CD14-positive monocyte (primary cell): ENCODE measurements at regions of chr19 and their contacts with region 1.

Region 1: DNA sequence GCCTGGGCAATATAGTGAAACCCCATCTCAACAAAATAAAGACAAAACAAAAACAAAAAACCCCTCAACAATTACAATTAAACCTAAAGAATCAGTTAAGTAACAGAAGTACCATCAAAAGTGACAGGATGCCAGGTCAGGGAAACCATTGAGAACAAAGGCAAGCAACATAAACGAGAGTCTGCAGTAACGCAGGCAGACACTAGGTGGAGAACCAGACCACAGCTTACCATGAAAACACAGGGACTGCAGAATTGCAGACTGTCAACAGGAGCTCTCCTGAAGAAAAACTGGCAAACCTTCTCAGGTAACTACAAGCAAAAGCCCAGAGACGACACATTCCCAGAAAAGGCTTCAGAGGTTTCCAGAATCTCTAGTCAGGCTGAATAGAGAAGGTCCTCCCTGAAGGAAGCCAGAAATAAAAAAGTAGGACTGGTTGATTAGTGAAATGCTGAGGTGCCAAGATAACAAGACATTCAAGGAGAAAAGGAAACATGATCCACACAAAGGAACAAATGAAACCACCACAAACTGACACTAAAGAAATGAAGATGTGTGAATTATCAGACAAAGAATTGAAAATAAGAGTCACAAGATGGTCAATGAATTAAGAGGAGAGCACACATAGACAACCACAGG is 2.2 kb upstream of the ZNF665 start:
- DNase-seq: peak; percentile 63 to 74 (median 72)
- H3K4me3 ChIP-seq: no peak overlapping the region
- H3K4me3 Mint-ChIP-seq: peak overlapping the region in 1 of 2 donors; percentile 20
- H3K27ac ChIP-seq: no peak overlapping the region
- H3K27ac Mint-ChIP-seq: no peak overlapping the region
- H3K4me1 ChIP-seq: peaks cover 22 to 23% of the 10 kb centered on the region in 2 donors
- H3K4me1 Mint-ChIP-seq: peaks cover 23% of the 10 kb centered on the region
- H3K27me3 ChIP-seq: no peaks in the 10 kb centered on the region
- H3K27me3 Mint-ChIP-seq: peaks cover 3 to 11% (median 4%) of the 10 kb centered on the region in 3 donors
- CTCF ChIP-seq: peak; percentile 88

Region 2: DNA sequence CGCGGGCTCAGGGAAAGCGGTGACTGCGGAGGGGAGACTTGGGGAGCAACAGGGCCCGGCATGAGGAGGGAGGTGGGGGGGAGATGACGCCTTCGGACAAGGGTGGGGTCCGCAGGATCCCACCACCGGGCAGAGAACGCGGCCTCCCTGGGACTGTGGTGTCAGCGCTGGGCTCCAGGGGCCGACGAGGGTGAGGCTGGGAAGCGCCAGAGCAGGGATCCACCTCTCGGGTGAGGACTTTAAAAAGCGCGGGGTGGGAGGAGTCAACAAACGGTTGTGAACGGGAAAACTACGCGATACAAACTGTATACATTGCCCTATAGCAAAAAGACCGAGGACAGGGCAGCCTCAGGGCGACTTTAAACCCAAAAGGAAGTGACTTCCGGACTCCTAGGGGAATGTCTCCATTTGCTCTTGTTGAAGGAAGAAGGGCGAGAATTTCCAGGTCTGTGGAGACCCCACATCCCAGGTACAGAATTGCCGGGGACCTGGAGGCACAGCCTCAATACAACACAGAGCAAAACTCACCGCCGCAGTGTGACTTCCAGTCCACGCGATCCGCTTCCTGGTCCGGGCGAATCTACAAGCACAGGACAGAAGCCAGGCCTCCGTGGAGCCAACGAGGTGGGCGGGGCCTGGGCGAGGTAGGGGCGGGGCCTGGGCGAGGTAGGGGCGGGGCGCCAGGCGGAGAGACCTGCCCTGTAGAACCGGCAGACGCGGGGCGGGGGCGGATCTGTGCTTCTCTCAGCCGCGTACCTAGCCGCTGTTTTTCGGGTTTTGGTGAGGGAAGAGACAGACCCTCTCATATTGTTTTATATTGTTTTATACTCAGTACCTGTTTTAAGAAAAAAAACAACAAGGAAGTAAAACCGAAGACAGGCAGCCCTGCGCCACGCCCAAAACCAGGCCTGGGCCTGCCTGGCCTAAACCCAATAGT is 272.3 kb before region 1 on chr19 and contains the start of gene ZNF888:
- intact Hi-C with region 1: loop called in 1 of 2 experiments (anchors 10 kb)
- DNase-seq: peak; percentile 82 to 85 (median 83)
- H3K4me3 ChIP-seq: peak within 1 kb of the TSS; percentile 62 to 89 (median 87)
- H3K4me3 Mint-ChIP-seq: peak within 1 kb of the TSS; percentile 93 to 96
- H3K27ac ChIP-seq: peak within 1 kb of the TSS; percentile 83 to 87
- H3K27ac Mint-ChIP-seq: peak within 1 kb of the TSS; percentile 93 to 98 (median 95)
- H3K4me1 ChIP-seq: peaks cover 24 to 29% of the 10 kb centered on the region in 2 donors
- H3K4me1 Mint-ChIP-seq: peaks cover 34% of the 10 kb centered on the region
- H3K27me3 ChIP-seq: no peaks in the 10 kb centered on the region
- H3K27me3 Mint-ChIP-seq: peaks cover 0 to 1% (median 0%) of the 10 kb centered on the region in 3 donors
- CTCF ChIP-seq: no peak
- polyA plus RNA-seq, gene ZNF888: 0.71 to 1.7 (median 1.4) TPM

Region 3: DNA sequence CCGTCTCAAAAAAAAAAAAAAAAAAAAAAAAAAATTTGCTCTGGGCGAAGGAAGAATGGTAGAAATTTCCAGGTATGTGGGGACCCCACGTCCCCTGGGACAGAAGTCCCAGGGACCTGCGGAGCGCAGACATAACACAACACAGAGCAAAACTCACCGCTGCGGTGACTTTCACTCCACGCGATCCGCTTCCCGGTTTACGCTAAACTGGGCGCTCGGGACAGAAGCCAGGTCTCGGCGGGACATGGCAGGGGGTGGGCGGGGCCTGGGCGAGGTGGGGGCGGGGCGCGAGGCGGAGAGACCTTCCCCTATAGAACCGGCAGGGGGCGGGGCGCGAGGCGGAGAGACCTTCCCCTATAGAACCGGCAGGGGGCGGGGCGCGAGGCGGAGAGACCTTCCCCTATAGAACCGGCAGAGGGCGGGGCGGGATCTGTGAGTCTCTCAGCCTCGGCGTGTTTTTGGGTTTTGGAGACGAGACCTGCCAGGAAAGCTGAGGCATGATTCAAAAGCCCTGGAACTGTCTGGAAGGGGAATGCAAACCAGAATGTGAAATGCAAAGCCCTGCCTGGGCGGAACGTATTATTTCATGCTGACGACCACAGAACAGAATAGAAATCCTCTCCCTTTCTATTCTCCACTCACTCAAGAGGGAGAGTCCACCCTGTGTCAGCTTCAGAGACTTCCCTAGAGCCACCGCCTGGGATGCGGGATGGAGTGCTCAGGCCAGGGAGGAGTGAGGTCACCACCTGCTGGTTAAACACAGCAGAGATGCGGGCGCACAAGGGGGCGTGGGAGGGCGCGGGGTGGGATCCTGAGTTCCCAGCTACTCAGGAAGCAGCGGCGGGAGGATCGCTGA is 201.8 kb before region 1 on chr19:
- intact Hi-C with region 1: loop called in 1 of 2 experiments (anchors 10 kb)
- DNase-seq: peak; percentile 61 to 71 (median 63)
- H3K4me3 ChIP-seq: peak overlapping the region; percentile 32 to 78 (median 37)
- H3K4me3 Mint-ChIP-seq: peak overlapping the region; percentile 83 to 87
- H3K27ac ChIP-seq: peak overlapping the region in 1 of 2 donors; percentile 22
- H3K27ac Mint-ChIP-seq: peak overlapping the region in 3 of 7 donors; percentile 25 to 63 (median 60)
- H3K4me1 ChIP-seq: peaks cover 21 to 42% of the 10 kb centered on the region in 2 donors
- H3K4me1 Mint-ChIP-seq: peaks cover 38% of the 10 kb centered on the region
- H3K27me3 ChIP-seq: peaks cover 0 to 8% of the 10 kb centered on the region in 2 donors
- H3K27me3 Mint-ChIP-seq: peaks cover 6 to 20% (median 7%) of the 10 kb centered on the region in 3 donors
- CTCF ChIP-seq: peak; percentile 89

Region 4: GRCh38 chr19:53132141-53132991 is 63.0 kb before region 1 on chr19 and contains the start of gene ZNF415:
- intact Hi-C with region 1: no loop called
- DNase-seq: peak; percentile 3 to 26 (median 20)
- H3K4me3 ChIP-seq: peak within 1 kb of the TSS; percentile 32 to 69 (median 33)
- H3K4me3 Mint-ChIP-seq: peak within 1 kb of the TSS; percentile 74 to 92
- H3K27ac ChIP-seq: no peak within 1 kb of the TSS
- H3K27ac Mint-ChIP-seq: no peak within 1 kb of the TSS
- H3K4me1 ChIP-seq: peaks cover 11 to 12% of the 10 kb centered on the region in 2 donors
- H3K4me1 Mint-ChIP-seq: peaks cover 18% of the 10 kb centered on the region
- H3K27me3 ChIP-seq: peaks cover 0 to 21% of the 10 kb centered on the region in 2 donors
- H3K27me3 Mint-ChIP-seq: peaks cover 17 to 31% (median 27%) of the 10 kb centered on the region in 3 donors
- CTCF ChIP-seq: no peak
- polyA plus RNA-seq, gene ZNF415: 0.11 to 0.17 TPM in 2 of 3 donors, not detected in the other

Region 5: DNA sequence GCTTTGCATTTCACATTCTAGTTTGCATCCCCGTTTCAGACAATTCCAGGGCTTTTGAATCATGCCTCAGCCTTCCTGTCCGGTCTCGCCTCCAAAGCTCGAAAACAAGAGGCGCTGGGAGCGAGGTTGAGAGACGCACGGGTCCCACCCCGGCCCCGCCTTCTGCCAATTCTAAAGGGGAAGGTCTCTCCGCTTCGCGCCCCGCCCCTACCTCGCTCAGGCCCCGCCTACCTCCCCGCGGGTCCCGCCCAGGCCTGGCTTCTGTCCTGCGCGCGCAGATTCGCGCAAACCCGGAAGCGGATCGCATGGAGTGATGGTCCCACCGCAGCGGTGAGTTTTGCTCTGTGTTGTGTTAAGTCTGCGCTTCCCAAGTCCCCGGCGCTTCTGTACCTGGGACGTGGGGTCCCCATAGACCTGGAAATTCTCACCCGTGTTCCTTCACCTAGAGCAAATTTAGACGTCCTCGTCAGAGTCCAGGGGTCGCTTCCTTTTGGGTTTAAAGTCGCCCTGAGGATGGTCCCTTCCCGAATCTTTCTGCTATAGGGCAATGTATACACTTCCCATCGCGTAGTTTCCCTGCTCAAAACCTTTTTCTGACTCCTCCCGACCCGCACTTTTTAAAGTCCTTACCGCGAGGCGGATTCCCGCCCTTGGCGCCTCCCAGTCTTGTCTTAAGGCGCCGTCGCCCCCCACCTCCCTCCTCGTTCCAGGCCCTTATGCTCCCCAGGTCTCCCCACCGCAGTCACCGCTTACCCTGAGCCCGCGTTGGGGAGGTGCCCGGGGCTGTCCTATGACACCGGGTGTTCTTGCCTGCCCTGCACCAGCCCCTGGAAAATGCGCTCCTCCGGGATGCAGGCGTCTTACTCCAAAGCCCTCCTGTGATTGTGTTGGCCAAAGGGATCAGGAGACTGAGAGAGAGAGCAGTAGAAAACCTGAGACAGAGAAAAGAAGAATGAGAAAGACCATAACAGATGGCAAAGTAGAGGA is 138.4 kb after region 1 on chr19 and contains the start of gene ZNF845:
- intact Hi-C with region 1: loop called (anchors 5 kb)
- DNase-seq: peak; percentile 80 to 82 (median 82)
- H3K4me3 ChIP-seq: peak within 1 kb of the TSS; percentile 72 to 91 (median 79)
- H3K4me3 Mint-ChIP-seq: peak within 1 kb of the TSS; percentile 97 to 99
- H3K27ac ChIP-seq: peak within 1 kb of the TSS; percentile 11 to 77
- H3K27ac Mint-ChIP-seq: peak within 1 kb of the TSS; percentile 84 to 91 (median 89)
- H3K4me1 ChIP-seq: peaks cover 16 to 17% of the 10 kb centered on the region in 2 donors
- H3K4me1 Mint-ChIP-seq: peaks cover 21% of the 10 kb centered on the region
- H3K27me3 ChIP-seq: no peaks in the 10 kb centered on the region
- H3K27me3 Mint-ChIP-seq: peaks cover 0 to 8% (median 0%) of the 10 kb centered on the region in 3 donors
- CTCF ChIP-seq: no peak
- polyA plus RNA-seq, gene ZNF845: 0.51 to 3.6 (median 2.6) TPM

Region 6: DNA sequence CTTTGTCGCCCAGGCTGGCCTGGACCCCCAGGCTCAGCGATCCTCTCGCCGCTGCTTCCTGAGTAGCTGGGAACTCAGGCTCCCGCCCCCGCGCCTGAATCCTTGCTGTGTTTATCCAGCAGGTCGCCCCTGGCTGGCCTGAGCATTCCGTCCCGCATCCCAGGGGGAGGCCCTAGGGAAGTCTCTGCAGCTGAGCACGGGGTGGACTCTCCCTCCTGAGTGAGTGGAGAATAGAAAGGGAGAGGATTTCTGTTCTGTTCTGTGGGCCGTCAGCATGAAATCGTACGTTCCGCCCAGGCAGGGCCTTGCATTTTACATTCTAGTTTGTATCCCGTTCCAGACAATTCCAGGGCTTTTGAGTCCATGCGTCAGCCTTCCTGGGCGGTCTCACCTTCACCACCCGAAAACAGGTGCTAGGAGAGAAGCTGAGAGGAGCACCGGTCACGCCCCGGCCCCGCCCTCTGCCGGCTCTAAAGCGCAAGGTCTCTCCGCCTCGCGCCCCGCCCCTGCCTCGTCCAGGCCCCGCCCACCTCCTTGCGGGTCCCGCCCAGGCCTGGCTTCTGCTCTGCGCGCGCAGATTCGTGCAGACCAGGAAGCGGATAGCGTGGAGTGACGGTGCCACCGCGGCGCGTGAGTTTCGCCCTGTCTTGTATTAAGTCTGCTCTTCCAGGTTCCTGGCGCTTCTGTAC is 236.2 kb after region 1 on chr19 and contains the start of gene ZNF761:
- intact Hi-C with region 1: loop called in 1 of 2 experiments (anchors 5 kb)
- DNase-seq: peak; percentile 91 to 92 (median 92)
- H3K4me3 ChIP-seq: peak within 1 kb of the TSS; percentile 55 to 94 (median 91)
- H3K4me3 Mint-ChIP-seq: peak within 1 kb of the TSS; percentile 93 to 96
- H3K27ac ChIP-seq: peak within 1 kb of the TSS; percentile 66 to 93
- H3K27ac Mint-ChIP-seq: peak within 1 kb of the TSS; percentile 93 to 96 (median 94)
- H3K4me1 ChIP-seq: peaks cover 18 to 20% of the 10 kb centered on the region in 2 donors
- H3K4me1 Mint-ChIP-seq: peaks cover 19% of the 10 kb centered on the region
- H3K27me3 ChIP-seq: peaks cover 0 to 4% of the 10 kb centered on the region in 2 donors
- H3K27me3 Mint-ChIP-seq: peaks cover 1 to 9% (median 6%) of the 10 kb centered on the region in 3 donors
- CTCF ChIP-seq: peak; percentile 59
- polyA plus RNA-seq, gene ZNF761: 3.4 to 6.1 (median 5.6) TPM

Region 7: DNA sequence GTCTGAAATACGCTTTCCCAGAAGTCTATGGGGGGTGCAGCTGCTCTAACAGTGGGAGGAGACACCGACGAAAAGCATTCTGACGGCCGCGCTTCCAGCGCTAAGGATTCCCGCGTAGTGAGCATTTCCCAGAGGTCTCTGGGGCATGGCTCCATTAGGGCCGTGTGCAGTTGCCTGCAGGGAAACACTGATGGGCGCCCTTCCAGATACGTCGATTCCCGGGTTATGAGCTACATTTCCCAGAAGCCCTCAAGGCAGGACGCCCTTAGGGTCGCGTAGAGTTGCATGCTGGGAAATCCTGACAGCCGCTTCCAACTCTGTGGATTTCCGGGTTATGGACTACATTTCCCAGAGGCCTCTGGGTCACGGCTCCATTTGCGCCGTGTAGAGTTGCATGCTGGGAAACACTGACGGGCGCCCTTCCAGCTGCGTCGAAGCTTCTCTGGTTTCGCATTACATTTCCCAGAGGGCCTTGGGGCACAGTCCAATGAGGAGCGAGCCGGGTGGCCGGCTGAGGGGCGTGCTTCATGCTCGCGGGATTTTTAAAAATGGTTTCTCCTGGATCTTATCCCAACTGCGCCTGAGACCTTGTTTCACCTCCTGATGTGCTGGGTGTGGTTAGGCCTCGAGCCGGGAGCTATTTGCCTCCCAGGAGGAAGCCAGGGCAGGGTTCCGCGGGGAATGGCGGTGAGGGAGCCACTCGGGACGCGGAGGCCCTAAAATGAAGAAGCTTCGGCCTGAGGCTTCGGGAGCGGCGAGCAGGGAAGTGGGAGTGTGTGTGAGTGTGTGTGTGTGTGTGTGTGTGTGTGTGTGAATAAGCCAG is 325.4 kb after region 1 on chr19:
- intact Hi-C with region 1: loop called (anchors 5 to 10 kb)
- DNase-seq: peak; percentile 91 to 92 (median 92)
- H3K4me3 ChIP-seq: peak overlapping the region; percentile 63 to 91 (median 72)
- H3K4me3 Mint-ChIP-seq: peak overlapping the region; percentile 92 to 96
- H3K27ac ChIP-seq: peak overlapping the region; percentile 71 to 82
- H3K27ac Mint-ChIP-seq: peak overlapping the region; percentile 83 to 93 (median 86)
- H3K4me1 ChIP-seq: peaks cover 16 to 17% of the 10 kb centered on the region in 2 donors
- H3K4me1 Mint-ChIP-seq: peaks cover 16% of the 10 kb centered on the region
- H3K27me3 ChIP-seq: no peaks in the 10 kb centered on the region
- H3K27me3 Mint-ChIP-seq: peaks cover 0 to 3% (median 1%) of the 10 kb centered on the region in 3 donors
- CTCF ChIP-seq: no peak